Caco-2 (cell line): ENCODE measurements at regions of chr1 and their contacts with region 1.

Region 1: DNA sequence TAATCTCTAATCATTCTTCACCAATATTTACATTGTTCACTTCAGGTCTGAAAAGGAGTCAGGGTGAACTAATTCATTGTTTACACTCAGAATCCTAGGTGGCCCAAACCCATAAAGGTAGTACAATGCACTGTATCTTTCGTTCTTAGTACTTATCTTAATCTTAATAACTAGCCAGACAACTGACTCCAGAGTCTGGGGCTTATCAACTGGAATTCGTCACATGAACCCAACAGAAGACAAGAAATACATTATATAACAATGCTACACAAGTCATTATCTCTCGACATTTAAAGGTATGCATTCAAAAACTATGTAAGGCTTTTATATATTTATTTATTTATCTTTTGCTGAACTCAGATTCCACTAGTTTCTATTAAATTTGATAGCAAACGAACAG is 125.9 kb upstream of the ESRRG start:
- DNase-seq: peak; percentile 45 to 47
- H3K4me3 ChIP-seq: no peak overlapping the region
- H3K4me3 Mint-ChIP-seq: no peak overlapping the region
- H3K27ac Mint-ChIP-seq: no peak overlapping the region
- H3K4me1 ChIP-seq: peaks cover 38% of the 10 kb centered on the region
- H3K4me1 Mint-ChIP-seq: peaks cover 12% of the 10 kb centered on the region
- H3K27me3 ChIP-seq: no peaks in the 10 kb centered on the region
- H3K27me3 Mint-ChIP-seq: no peaks in the 10 kb centered on the region
- CTCF ChIP-seq: no peak

Region 2: GRCh38 chr1:216330262-216330661 is 518.9 kb before region 1 on chr1:
- CTCF ChIA-PET with region 1: no interaction called
- POLR2A ChIA-PET with region 1: no interaction called
- intact Hi-C with region 1: no loop called
- DNase-seq: no peak
- H3K4me3 ChIP-seq: no peak overlapping the region
- H3K4me3 Mint-ChIP-seq: no peak overlapping the region
- H3K27ac Mint-ChIP-seq: no peak overlapping the region
- H3K4me1 ChIP-seq: peaks cover 6% of the 10 kb centered on the region; the same call in 1 of the 2 replicates
- H3K4me1 Mint-ChIP-seq: peaks cover 4% of the 10 kb centered on the region
- H3K27me3 ChIP-seq: no peaks in the 10 kb centered on the region
- H3K27me3 Mint-ChIP-seq: no peaks in the 10 kb centered on the region
- CTCF ChIP-seq: no peak

Region 3: GRCh38 chr1:216904471-216904870 is 55.3 kb after region 1 on chr1:
- CTCF ChIA-PET with region 1: no interaction called
- POLR2A ChIA-PET with region 1: no interaction called
- intact Hi-C with region 1: loop called (anchors 1 kb)
- DNase-seq: peak; percentile 28 to 38
- H3K4me3 ChIP-seq: peak overlapping the region; percentile 29
- H3K4me3 Mint-ChIP-seq: peak overlapping the region; percentile 66
- H3K27ac Mint-ChIP-seq: peak overlapping the region; percentile 45
- H3K4me1 ChIP-seq: peaks cover 37% of the 10 kb centered on the region
- H3K4me1 Mint-ChIP-seq: peaks cover 32% of the 10 kb centered on the region
- H3K27me3 ChIP-seq: no peaks in the 10 kb centered on the region
- H3K27me3 Mint-ChIP-seq: no peaks in the 10 kb centered on the region
- CTCF ChIP-seq: no peak